ENCODE measurements at regions of chr5 and their contacts with region 1.

Region 1: GRCh38 chr5:15598294-15598902 is 98.4 kb downstream of the FBXL7 start:
- DNase-seq: peak in 1 of 2 experiments; percentile 75
- H3K4me3 ChIP-seq: no peak overlapping the region
- H3K27ac ChIP-seq: no peak overlapping the region
- H3K4me1 ChIP-seq: peaks cover 1 to 13% (median 10%) of the 10 kb centered on the region in 4 experiments; a peak in 4 of 7 replicates
- H3K27me3 ChIP-seq: no peaks in the 10 kb centered on the region
- CTCF ChIP-seq: peak; percentile 18 to 73 (median 52); a peak in 3 of 4 replicates
- EP300 ChIP-seq: no peak
- POLR2A ChIP-seq: no peak
- RAD21 ChIP-seq: peak; percentile 51 to 61

Region 2: DNA sequence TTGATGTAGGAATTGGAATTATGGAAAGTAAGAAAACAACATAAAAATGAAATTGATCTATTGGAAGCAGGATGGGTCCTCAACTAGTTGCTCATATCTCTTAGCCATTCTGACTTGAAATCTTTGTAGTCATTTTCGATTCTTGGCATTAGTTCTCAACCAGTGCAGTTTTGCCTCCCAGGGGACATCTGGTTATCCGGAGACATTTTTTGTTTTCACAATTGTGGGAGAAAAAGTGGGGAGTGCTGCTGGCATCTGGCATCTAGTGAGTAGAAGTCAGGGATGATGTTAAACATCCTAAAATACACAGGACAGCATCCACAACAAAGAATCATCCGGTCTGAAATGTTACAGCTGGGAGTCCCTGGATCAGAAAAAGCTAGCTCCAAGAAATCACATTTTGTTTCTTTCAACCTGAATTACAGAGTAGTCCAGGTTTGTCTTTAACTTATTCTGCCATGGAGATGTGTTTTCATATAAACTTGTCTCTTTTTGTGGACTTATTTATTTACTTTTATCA is 23.5 kb before region 1 on chr5:
- CTCF ChIA-PET with region 1: interaction called, 12 read pairs
- POLR2A ChIA-PET with region 1: no interaction called
- DNase-seq: no peak
- H3K4me3 ChIP-seq: no peak overlapping the region
- H3K27ac ChIP-seq: no peak overlapping the region
- H3K4me1 ChIP-seq: peaks cover 0 to 4% (median under 1%) of the 10 kb centered on the region in 4 experiments; a peak in 3 of 7 replicates
- H3K27me3 ChIP-seq: no peaks in the 10 kb centered on the region
- CTCF ChIP-seq: no peak
- EP300 ChIP-seq: no peak
- POLR2A ChIP-seq: no peak
- RAD21 ChIP-seq: no peak

Region 3: GRCh38 chr5:15585841-15586591 is 12.4 kb before region 1 on chr5:
- CTCF ChIA-PET with region 1: interaction called, 39 read pairs
- POLR2A ChIA-PET with region 1: no interaction called
- DNase-seq: no peak
- H3K4me3 ChIP-seq: no peak overlapping the region
- H3K27ac ChIP-seq: no peak overlapping the region
- H3K4me1 ChIP-seq: no peaks in the 10 kb centered on the region
- H3K27me3 ChIP-seq: no peaks in the 10 kb centered on the region
- CTCF ChIP-seq: no peak
- EP300 ChIP-seq: no peak
- POLR2A ChIP-seq: no peak
- RAD21 ChIP-seq: no peak

Region 4: GRCh38 chr5:15609076-15609725 is 10.8 kb after region 1 on chr5:
- CTCF ChIA-PET with region 1: interaction called, 32 read pairs
- POLR2A ChIA-PET with region 1: no interaction called
- DNase-seq: no peak
- H3K4me3 ChIP-seq: no peak overlapping the region
- H3K27ac ChIP-seq: no peak overlapping the region
- H3K4me1 ChIP-seq: no peaks in the 10 kb centered on the region; a peak in 1 of 7 replicates
- H3K27me3 ChIP-seq: no peaks in the 10 kb centered on the region
- CTCF ChIP-seq: no peak
- EP300 ChIP-seq: no peak
- POLR2A ChIP-seq: no peak
- RAD21 ChIP-seq: no peak

Region 5: DNA sequence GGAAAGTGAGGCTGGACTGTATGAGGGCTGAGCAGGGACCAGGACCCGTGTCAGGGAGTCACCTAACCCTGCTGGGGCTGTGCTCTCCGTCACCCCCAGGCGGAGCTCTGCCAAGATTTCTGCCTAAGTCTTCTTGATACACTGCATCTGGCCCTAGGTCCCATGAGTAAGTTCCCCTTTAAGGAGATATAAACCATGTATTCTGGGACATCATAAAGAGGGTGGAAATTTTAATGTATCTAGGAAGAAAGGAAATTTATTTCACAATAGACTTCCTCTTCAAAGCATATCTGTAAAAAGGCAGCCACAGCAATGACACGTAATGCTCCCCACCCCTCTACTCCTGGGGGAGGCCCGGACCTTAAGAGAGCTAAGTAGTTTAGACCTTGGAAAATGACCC is 84.9 kb after region 1 on chr5:
- CTCF ChIA-PET with region 1: interaction called, 10 read pairs
- POLR2A ChIA-PET with region 1: no interaction called
- DNase-seq: peak; percentile 39 to 76
- H3K4me3 ChIP-seq: no peak overlapping the region
- H3K27ac ChIP-seq: no peak overlapping the region
- H3K4me1 ChIP-seq: peaks cover 0 to 5% (median 2%) of the 10 kb centered on the region in 4 experiments; a peak in 3 of 7 replicates
- H3K27me3 ChIP-seq: no peaks in the 10 kb centered on the region
- CTCF ChIP-seq: peak; percentile 78 to 88 (median 82)
- EP300 ChIP-seq: no peak
- POLR2A ChIP-seq: no peak
- RAD21 ChIP-seq: peak; percentile 59 to 79

Region 6: GRCh38 chr5:15741591-15741990 is 143.2 kb after region 1 on chr5:
- CTCF ChIA-PET with region 1: no interaction called
- POLR2A ChIA-PET with region 1: no interaction called
- DNase-seq: no peak
- H3K4me3 ChIP-seq: no peak overlapping the region
- H3K27ac ChIP-seq: no peak overlapping the region
- H3K4me1 ChIP-seq: no peaks in the 10 kb centered on the region
- H3K27me3 ChIP-seq: no peaks in the 10 kb centered on the region
- CTCF ChIP-seq: no peak
- EP300 ChIP-seq: no peak
- POLR2A ChIP-seq: no peak
- RAD21 ChIP-seq: no peak

Region 7: GRCh38 chr5:16160706-16161105 is 562.3 kb after region 1 on chr5:
- CTCF ChIA-PET with region 1: no interaction called
- POLR2A ChIA-PET with region 1: no interaction called
- DNase-seq: no peak
- H3K4me3 ChIP-seq: no peak overlapping the region
- H3K27ac ChIP-seq: no peak overlapping the region
- H3K4me1 ChIP-seq: no peaks in the 10 kb centered on the region
- H3K27me3 ChIP-seq: no peaks in the 10 kb centered on the region
- CTCF ChIP-seq: peak in 2 of 3 experiments; percentile 74 to 76; a peak in 3 of 4 replicates
- EP300 ChIP-seq: no peak
- POLR2A ChIP-seq: no peak
- RAD21 ChIP-seq: peak; percentile 92 to 95

Measured in H1 (cell line).